ENCODE measurements at regions of chr4 and their contacts with region 1.

Region 1: DNA sequence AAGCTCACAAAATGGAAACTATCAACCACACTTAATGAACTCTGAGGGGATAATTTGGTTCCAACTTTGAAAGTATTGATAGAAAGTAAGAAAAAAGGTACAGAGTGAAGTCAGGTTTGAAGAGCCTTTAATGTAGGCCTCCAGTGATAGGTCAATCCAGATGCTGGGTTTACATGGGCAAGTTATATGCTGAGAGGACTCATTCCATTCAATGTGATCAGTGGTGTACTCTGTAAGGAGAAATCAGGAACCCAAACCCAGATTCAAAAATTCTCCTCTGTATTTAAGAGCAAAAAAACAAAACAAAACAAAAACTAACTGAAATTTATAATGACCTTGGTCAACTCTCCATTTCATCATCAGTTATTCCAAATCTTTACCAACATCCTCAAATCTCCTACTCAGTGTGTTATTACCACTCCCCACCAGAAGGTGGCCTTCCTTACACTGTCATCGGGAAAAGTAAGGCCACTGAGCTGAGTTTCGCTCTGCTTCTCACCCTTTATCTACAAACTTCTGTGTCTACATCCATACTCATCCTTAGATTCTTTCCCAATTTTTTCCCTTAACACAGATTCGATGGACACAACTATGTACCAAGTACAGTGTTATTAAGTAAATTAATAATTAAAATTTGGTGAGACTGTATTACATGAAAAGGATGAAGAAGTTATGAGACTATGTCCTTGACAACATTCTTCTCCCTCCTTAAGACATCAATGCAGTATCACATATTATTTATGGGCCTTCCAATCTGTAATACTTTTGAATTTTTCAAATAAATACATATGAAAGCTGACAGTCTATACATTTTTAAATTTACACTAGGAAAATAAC is 88.3 kb downstream of the ZAR1 start:
- DNase-seq: peak; percentile 27
- H3K4me3 ChIP-seq: no peak overlapping the region
- H3K27me3 ChIP-seq: no peaks in the 10 kb centered on the region
- CTCF ChIP-seq: peak; percentile 85

Region 2: GRCh38 chr4:48315728-48316630 is 262.4 kb before region 1 on chr4:
- CTCF ChIA-PET with region 1: no interaction called
- POLR2A ChIA-PET with region 1: no interaction called
- DNase-seq: no peak
- H3K4me3 ChIP-seq: no peak overlapping the region
- H3K27me3 ChIP-seq: no peaks in the 10 kb centered on the region
- CTCF ChIP-seq: peak; percentile 73

Region 3: DNA sequence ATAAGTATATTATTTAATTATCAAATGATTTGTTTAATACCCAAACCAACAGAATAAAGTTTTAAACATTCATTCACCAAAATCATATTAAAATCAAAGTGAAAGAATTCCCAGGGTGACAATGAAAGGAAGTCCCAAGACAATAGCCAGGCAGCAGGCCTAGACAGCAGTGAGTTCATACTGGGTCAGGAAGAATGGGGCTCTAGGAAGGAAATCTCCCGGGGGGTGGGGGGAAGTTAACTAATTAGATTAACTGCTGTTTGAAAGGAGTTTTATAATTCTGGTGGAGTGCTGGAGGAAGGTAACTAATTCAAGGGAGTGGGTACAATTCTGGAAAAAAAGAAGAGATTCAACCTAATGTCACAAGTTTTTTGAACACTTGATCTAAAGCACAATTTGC is 15.8 kb after region 1 on chr4:
- CTCF ChIA-PET with region 1: interaction called, 12 read pairs
- POLR2A ChIA-PET with region 1: no interaction called
- DNase-seq: no peak
- H3K4me3 ChIP-seq: no peak overlapping the region
- H3K27me3 ChIP-seq: no peaks in the 10 kb centered on the region
- CTCF ChIP-seq: no peak

Region 4: GRCh38 chr4:48963042-48963679 is 384.8 kb after region 1 on chr4:
- CTCF ChIA-PET with region 1: interaction called, 38 read pairs
- POLR2A ChIA-PET with region 1: no interaction called
- DNase-seq: no peak
- H3K4me3 ChIP-seq: no peak overlapping the region
- H3K27me3 ChIP-seq: peaks cover 1% of the 10 kb centered on the region; the same call in 1 of the 2 replicates
- CTCF ChIP-seq: peak; percentile 98

Measured in BJ (cell line).